GM13976 (cell line): ENCODE measurements at regions of chr14 and their contacts with region 1.

Region 1: GRCh38 chr14:68663385-68664076 is 129.3 kb downstream of the ZFP36L1 start:
- DNase-seq: peak; percentile 69
- CTCF ChIP-seq: no peak

Region 2: DNA sequence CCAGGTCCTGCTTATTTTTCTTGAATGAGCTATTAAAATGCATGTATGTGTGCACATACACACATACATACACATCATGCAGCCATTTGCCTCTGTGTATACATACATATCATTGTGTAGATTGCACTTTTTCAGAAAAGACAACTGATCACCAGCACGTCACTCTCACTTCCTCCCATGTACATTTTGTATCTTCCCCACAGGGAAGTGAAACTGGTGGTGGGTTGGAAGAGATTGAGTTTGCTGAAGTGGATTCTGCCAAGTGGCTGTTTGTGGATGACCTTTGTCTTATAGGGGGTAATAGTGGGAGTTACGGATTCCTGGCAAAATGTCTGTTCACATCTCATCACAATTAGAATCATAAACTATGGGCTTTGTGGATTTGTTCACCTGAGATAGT is 395.3 kb before region 1 on chr14:
- in situ Hi-C with region 1: loop called (anchors 25 kb)
- DNase-seq: peak; percentile 41
- CTCF ChIP-seq: no peak

Region 3: DNA sequence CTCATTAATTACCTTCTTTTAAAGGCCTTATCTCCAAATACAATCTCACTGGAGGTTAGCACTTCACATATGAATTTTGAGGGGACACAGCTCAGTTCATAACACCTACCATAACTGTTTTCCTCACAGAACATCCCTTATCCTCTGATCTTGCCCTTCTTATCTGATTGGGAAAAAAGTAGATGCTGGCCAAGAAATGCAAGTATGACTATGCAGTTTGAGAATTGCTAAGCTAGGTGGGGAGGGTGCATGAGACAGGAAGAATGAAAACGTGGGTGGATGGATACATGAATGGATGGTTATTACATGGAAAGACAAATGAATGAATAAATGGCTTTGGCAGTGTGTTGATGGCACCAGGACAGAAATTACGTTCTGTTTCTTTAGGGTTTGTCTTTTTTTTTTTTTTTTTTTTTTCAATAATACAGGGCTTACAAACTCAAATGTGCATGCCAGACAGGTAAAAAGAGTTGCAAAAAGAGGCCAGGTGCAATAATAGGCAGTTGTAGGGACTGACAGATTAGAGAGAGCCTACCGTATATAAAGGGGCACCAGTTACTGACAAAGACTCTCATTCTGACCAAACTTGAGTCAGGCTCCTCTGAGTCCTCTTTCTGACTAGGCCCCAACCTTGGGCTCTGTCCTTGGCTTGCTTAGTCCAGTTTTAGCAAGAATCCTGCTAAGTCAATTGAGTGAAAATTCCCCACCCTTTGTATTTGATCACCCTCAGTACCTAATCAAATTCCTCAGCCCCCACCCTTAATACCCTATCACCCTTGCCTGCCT is 175.5 kb before region 1 on chr14:
- in situ Hi-C with region 1: no loop called
- DNase-seq: no peak
- CTCF ChIP-seq: no peak